ENCODE measurements at regions of chr15 and their contacts with region 1.

Region 1: DNA sequence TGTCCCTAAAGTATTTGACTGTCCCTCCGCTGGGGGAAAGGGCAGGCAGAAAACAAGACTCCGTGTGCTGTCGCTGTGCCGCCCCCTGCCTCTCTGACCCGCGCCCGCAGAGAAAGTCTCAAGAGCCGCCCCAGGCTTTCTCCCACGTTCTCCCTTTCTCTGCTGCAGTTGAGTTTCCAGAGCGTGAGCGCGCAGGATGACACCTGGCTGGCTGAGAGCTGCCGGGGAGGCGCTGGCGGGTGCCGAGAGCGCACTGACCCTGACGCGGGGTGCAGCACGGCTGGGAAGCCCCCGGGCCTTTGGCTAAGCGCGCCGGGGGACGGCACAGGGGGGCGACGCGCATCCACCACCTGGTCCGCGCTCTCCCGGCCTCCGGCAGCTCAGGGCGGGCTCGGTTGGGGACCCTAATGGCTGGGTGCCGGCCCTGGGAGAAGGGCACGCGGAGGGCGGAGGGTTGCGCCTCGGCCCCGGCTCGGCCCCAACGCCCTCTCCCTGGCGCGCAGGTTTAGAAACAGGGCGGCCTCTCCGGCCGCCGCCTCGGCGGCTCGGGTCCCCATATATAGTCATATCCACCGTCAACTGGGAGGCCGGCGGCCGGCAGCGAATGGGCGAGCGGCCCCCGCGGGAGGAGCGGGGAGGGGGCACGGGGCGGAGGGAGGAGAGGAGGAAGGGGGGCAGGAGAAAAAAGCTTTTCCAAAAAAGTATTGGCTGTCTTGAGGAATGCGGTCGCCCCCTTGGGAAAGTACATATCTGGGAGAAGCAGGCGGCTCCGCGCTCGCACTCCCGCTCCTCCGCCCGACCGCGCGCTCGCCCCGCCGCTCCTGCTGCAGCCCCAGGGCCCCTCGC is at the start of gene TPM1:
- DNase-seq: peak; percentile 69 to 83
- H3K4me3 ChIP-seq: peak within 1 kb of the TSS; percentile 80
- H3K27ac ChIP-seq: peak within 1 kb of the TSS; percentile 93
- H3K4me1 ChIP-seq: peaks cover 62% of the 10 kb centered on the region
- H3K27me3 ChIP-seq: no peaks in the 10 kb centered on the region
- CTCF ChIP-seq: no peak; the same call in 1 of the 2 replicates
- total RNA-seq, gene TPM1: 174 and 225 TPM in 2 replicates

Region 2: DNA sequence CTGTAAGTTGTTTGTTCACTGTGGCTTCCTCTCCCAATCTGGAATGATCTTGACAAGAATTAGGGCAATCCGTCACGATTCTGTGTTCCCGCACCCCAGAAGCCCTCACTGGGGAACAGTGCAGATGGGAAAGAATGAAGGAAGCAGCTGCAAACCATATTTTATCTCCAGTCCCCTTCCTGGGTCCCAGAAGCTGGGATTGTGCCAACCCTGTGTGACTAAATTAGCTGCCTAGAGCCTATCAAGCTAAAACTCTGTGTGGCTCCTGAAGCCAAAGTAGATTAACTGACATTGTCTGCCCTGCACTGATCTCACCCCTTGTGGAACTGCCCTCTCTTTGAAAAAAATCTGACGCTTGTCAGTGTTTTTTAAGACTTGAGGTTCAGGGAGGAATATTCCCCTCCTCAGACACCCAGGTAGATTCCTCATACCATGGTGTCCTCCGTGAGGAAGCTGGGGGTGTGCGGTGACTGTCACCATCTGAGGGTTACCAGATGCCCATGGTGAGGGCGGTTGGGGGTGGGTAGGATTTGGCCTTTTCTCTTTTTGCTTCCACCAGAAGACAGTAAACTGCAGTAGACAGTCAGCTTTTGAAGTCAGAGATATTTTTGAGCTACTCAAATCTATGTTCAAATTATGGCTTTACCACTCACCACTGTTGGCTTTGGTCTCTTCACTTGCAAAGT is 357.9 kb before region 1 on chr15:
- CTCF ChIA-PET with region 1: no interaction called
- POLR2A ChIA-PET with region 1: interaction called, 11 read pairs
- intact Hi-C with region 1: no loop called
- DNase-seq: no peak
- H3K4me3 ChIP-seq: no peak overlapping the region
- H3K27ac ChIP-seq: no peak overlapping the region
- H3K4me1 ChIP-seq: no peaks in the 10 kb centered on the region
- H3K27me3 ChIP-seq: no peaks in the 10 kb centered on the region
- CTCF ChIP-seq: no peak

Region 3: GRCh38 chr15:62847900-62848489 is 194.2 kb before region 1 on chr15:
- CTCF ChIA-PET with region 1: no interaction called
- POLR2A ChIA-PET with region 1: interaction called, 10 read pairs
- intact Hi-C with region 1: no loop called
- DNase-seq: peak in 1 of 2 experiments; percentile 46
- H3K4me3 ChIP-seq: no peak overlapping the region
- H3K27ac ChIP-seq: peak overlapping the region; percentile 73
- H3K4me1 ChIP-seq: peaks cover 69% of the 10 kb centered on the region
- H3K27me3 ChIP-seq: no peaks in the 10 kb centered on the region
- CTCF ChIP-seq: peak; percentile 75

Region 4: DNA sequence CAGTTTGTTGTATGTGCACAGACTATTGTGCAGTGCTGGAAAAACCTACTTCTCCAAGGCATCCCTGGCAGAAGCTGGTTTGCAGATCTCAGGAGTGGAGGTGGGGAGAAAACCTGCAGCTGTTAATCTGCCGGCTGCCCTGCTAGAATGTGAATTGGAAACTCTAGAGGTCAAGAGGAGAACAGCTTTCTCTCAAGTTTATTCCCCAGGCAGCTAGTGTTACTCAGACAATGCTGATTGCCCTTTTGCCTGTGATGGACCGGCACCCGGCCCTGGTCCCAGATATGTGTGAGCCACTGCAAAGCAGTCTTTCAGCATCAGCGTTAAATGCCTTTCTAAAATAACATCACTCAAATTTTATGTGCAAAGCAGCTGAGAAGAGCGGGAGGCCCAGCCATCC is 129.4 kb before region 1 on chr15:
- CTCF ChIA-PET with region 1: no interaction called
- POLR2A ChIA-PET with region 1: interaction called, 19 read pairs
- intact Hi-C with region 1: no loop called
- DNase-seq: no peak
- H3K4me3 ChIP-seq: no peak overlapping the region
- H3K27ac ChIP-seq: no peak overlapping the region
- H3K4me1 ChIP-seq: 0 out of 2 replicates have a peak, but pooled peaks cover 9% of the 10 kb centered on the region
- H3K27me3 ChIP-seq: no peaks in the 10 kb centered on the region
- CTCF ChIP-seq: no peak

Region 5: GRCh38 chr15:63019539-63020109 is 22.6 kb before region 1 on chr15:
- CTCF ChIA-PET with region 1: no interaction called
- POLR2A ChIA-PET with region 1: no interaction called
- intact Hi-C with region 1: no loop called
- DNase-seq: peak; percentile 91 to 94
- H3K4me3 ChIP-seq: no peak overlapping the region; the same call in 1 of the 2 replicates
- H3K27ac ChIP-seq: peak overlapping the region; percentile 75
- H3K4me1 ChIP-seq: peaks cover 51% of the 10 kb centered on the region
- H3K27me3 ChIP-seq: no peaks in the 10 kb centered on the region
- CTCF ChIP-seq: no peak

Region 6: GRCh38 chr15:63067976-63068743 is 26.0 kb after region 1 on chr15:
- CTCF ChIA-PET with region 1: interaction called, 11 read pairs
- POLR2A ChIA-PET with region 1: interaction called, 4 read pairs
- intact Hi-C with region 1: no loop called
- DNase-seq: no peak
- H3K4me3 ChIP-seq: no peak overlapping the region
- H3K27ac ChIP-seq: no peak overlapping the region
- H3K4me1 ChIP-seq: no peaks in the 10 kb centered on the region
- H3K27me3 ChIP-seq: no peaks in the 10 kb centered on the region
- CTCF ChIP-seq: no peak

Measured in PC-9 (cell line).